Esophagus squamous epithelium (tissue), 5 donors: ENCODE measurements at regions of chr19 and their contacts with region 1.

Region 1: GRCh38 chr19:54159352-54160181 is at the start of gene LENG1:
- DNase-seq: peak; percentile 100
- H3K4me3 ChIP-seq: peak within 1 kb of the TSS; percentile 56 to 82 (median 74)
- H3K27ac ChIP-seq: peak within 1 kb of the TSS; percentile 88 to 98 (median 98)
- H3K4me1 ChIP-seq: peaks cover 34 to 72% (median 40%) of the 10 kb centered on the region in 3 donors
- H3K27me3 ChIP-seq: peaks cover 0 to 5% (median 0%) of the 10 kb centered on the region in 4 donors
- CTCF ChIP-seq: peak in 4 of 6 experiments; percentile 27 to 62 (median 32)
- POLR2A ChIP-seq: peak in 3 of 4 donors; percentile 48 to 58 (median 54)
- total RNA-seq, gene LENG1: 1.7 to 4.7 (median 4.3) TPM

Region 2: DNA sequence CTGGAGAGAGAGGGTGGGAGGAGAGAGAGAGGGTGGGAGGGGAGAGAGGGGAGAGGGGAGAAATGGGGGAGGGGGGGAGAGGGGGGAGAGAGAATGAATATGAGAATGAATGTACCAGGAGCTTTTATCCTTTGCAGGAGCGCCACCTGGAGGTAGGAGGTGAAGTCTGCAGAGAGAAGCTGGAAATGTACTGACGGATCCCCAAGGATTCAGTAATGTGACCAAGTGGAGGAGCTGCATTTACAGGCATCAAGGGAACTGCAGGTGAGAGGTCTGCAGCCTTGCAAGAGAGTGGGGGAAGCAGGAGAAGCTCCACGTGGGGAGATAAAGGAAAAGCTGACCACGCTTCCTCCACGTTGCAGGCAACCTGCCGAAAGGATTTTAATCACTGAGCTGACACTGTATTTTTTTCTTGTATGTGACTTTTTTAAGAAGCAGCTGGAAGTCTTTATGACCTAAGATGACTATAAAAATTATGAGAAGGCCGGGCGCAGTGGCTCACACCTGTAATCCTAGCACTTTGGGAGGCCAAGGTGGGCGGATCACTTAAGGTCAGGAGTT is 129.6 kb before region 1 on chr19:
- intact Hi-C with region 1: no loop called
- DNase-seq: no peak
- H3K4me3 ChIP-seq: no peak overlapping the region
- H3K27ac ChIP-seq: no peak overlapping the region
- H3K4me1 ChIP-seq: no peaks in the 10 kb centered on the region
- H3K27me3 ChIP-seq: peaks cover 0 to 53% (median 0%) of the 10 kb centered on the region in 4 donors
- CTCF ChIP-seq: peak in 4 of 6 experiments; percentile 20 to 52 (median 44)
- POLR2A ChIP-seq: no peak

Region 3: GRCh38 chr19:54231077-54231931 is 71.7 kb after region 1 on chr19:
- intact Hi-C with region 1: loop called (anchors 10 kb)
- DNase-seq: no peak
- H3K4me3 ChIP-seq: no peak overlapping the region
- H3K27ac ChIP-seq: no peak overlapping the region
- H3K4me1 ChIP-seq: no peaks in the 10 kb centered on the region
- H3K27me3 ChIP-seq: peaks cover 0 to 30% (median 0%) of the 10 kb centered on the region in 4 donors
- CTCF ChIP-seq: peak; percentile 77 to 87 (median 85)
- POLR2A ChIP-seq: no peak